Panc1 (cell line): ENCODE measurements at regions of chr1 and their contacts with region 1.

Region 1: GRCh38 chr1:62688687-62689085 is 500 bp upstream of the DOCK7 start:
- DNase-seq: no peak
- ATAC-seq: no peak
- H3K4me3 ChIP-seq: peak overlapping the region; percentile 81
- H3K27ac ChIP-seq: peak overlapping the region; percentile 88
- H3K4me1 ChIP-seq: peaks cover 32% of the 10 kb centered on the region
- H3K27me3 ChIP-seq: no peaks in the 10 kb centered on the region
- CTCF ChIP-seq: no peak

Region 2: DNA sequence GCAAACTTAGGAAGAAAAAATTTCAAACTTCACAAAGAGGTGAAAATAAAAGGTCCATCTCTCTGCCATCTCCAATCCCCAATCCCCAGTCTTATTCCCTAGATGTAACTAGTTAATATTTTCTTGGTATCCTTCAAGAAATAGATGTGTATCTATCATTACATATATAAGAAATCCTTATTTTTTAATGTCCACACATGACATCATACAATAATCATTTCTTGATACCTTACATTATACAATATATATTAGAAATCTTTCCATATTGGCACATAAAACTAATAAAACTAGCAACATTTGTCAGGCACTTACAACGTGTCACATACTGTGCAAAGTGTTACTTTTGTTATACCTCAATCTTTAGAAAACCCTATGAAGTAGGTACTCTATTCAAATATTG is 16.7 kb before region 1 on chr1:
- CTCF ChIA-PET with region 1: interaction called, 5 read pairs
- POLR2A ChIA-PET with region 1: interaction called, 13 read pairs
- in situ Hi-C with region 1: no loop called
- intact Hi-C with region 1: no loop called
- DNase-seq: no peak
- ATAC-seq: no peak
- H3K4me3 ChIP-seq: no peak overlapping the region
- H3K27ac ChIP-seq: no peak overlapping the region
- H3K4me1 ChIP-seq: no peaks in the 10 kb centered on the region
- H3K27me3 ChIP-seq: no peaks in the 10 kb centered on the region
- CTCF ChIP-seq: no peak